ENCODE measurements at regions of chr13 and their contacts with region 1.

Region 1: DNA sequence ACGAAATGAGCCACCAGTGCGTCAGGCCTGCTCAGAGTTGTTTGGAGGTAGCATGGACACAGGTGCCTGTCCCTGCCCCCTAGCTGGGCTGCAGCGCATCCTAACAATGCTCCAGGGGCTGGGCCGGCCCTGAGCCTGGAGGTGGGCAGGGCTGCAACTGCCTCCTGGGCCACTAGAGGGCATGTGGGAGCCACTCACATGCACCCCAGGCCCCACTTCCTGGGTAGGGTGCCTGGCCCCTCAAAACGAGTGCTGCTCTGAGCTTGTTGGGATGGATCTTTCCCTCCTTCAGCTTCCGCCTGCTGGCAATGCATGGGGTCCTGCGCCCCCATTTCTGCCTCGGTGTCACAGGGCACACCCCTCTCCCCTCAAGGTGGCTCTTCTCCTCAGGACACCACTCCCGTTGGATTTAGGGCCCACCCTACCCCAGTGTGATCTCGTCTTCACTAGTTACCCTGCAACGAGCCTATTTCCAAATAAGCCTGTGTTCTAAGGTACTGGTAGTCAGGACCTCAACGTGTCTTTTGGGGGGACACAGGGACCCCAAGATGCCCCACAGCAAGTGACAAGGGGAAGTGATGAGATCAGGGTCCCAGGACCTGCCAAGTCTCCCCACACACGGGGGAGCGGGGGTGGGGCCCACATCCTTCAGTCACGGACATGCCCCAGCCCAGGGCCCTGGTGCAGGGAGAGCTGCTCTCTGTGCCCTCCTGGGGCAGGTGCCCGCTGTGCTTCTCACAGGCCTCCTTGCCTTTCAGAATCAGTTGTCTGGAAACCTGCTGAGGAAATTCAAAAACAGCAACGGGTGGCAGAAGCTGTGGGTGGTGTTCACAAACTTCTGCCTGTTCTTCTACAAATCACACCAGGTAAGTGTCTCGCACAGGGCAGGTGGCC is 131.3 kb downstream of the STK24 start:
- DNase-seq: no peak
- H3K4me3 ChIP-seq: no peak overlapping the region
- H3K27ac ChIP-seq: no peak overlapping the region
- H3K27me3 ChIP-seq: no peaks in the 10 kb centered on the region
- CTCF ChIP-seq: peak; percentile 98

Region 2: DNA sequence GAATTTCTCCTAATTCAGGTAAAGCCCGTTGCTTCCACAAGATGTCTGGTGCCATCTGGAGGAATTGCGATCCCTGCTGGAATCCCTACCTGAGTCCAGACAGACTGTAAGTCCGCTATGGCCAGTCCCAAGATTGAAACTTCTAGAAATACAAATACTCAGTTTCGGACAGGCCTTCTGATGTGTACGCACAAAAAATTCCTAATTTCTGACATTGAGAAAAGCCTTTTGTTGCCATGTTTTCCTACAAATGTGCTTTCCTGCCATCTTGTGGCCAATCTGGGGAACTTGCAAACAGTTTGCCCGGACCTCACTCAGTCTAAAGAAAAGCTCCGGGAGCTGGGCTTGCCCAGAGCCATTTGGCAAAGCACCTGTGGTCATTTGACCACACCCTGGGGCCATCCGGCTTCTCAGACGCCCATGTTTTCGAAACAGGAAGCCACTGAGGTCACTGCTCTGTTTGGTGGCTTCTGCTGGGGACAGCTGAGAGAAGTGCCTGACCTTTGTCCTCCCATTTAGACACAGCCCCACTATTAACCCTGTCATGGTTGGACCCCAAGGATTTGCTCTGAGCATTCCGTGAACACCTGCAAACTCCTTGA is 227.5 kb after region 1 on chr13:
- CTCF ChIA-PET with region 1: interaction called, 24 read pairs
- POLR2A ChIA-PET with region 1: no interaction called
- DNase-seq: peak; percentile 52
- H3K4me3 ChIP-seq: no peak overlapping the region
- H3K27ac ChIP-seq: no peak overlapping the region
- H3K27me3 ChIP-seq: peaks cover 1% of the 10 kb centered on the region
- CTCF ChIP-seq: peak; percentile 87

Measured in AG04450 (cell line).